ENCODE measurements at regions of chr1 and their contacts with region 1.

Region 1: GRCh38 chr1:61588736-61589672 is 135.9 kb downstream of the TM2D1 start:
- DNase-seq: peak; percentile 59
- ATAC-seq: peak; percentile 99
- H3K4me3 ChIP-seq: no peak overlapping the region
- H3K27ac ChIP-seq: no peak overlapping the region
- H3K4me1 ChIP-seq: peaks cover 0 to 3% of the 10 kb centered on the region in 2 experiments; a peak in 2 of 4 replicates
- H3K27me3 ChIP-seq: no peaks in the 10 kb centered on the region
- CTCF ChIP-seq: peak; percentile 68 to 94 (median 93)
- POLR2A ChIP-seq: no peak
- RAD21 ChIP-seq: peak; percentile 83

Region 2: DNA sequence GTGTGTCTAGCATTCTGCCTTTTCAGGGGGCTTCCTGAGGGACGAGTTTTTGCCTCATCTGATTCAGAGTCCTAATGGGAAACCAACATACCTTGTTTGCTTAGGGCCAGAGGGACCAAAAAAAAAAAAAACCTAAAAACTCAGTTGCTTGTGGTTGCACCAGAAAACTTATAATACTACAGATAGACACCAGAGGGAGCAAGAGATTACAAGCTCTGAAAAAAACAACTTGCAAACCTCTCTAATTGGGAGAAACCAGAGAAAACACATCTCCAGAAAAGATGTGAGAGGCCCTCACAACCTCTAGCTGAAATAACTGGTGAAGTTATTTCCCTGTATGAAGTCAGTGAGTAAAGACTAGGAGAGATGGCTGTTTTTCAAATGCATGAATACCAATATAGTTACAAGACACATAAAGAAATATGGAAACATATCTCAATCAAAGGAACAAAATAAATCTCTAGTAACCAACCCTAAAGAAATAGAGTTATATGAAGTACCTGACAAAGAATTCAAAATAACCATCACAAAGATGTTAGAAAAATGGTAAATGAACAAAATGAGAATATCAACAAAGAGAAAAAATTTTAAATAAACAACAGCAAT is 740.3 kb before region 1 on chr1:
- CTCF ChIA-PET with region 1: interaction called, 7 read pairs
- POLR2A ChIA-PET with region 1: no interaction called
- RAD21 ChIA-PET with region 1: no interaction called
- intact Hi-C with region 1: loop called (anchors 2 kb)
- DNase-seq: peak; percentile 54
- ATAC-seq: peak; percentile 69
- H3K4me3 ChIP-seq: no peak overlapping the region
- H3K27ac ChIP-seq: no peak overlapping the region
- H3K4me1 ChIP-seq: no peaks in the 10 kb centered on the region
- H3K27me3 ChIP-seq: no peaks in the 10 kb centered on the region
- CTCF ChIP-seq: peak; percentile 51 to 69 (median 60); a peak in 4 of 6 replicates
- POLR2A ChIP-seq: no peak
- RAD21 ChIP-seq: peak; percentile 74

Region 3: GRCh38 chr1:60978421-60979357 is 610.3 kb before region 1 on chr1:
- CTCF ChIA-PET with region 1: interaction called, 22 read pairs
- POLR2A ChIA-PET with region 1: no interaction called
- RAD21 ChIA-PET with region 1: no interaction called
- intact Hi-C with region 1: loop called (anchors 1 kb)
- DNase-seq: no peak
- ATAC-seq: peak; percentile 95
- H3K4me3 ChIP-seq: no peak overlapping the region
- H3K27ac ChIP-seq: no peak overlapping the region
- H3K4me1 ChIP-seq: no peaks in the 10 kb centered on the region
- H3K27me3 ChIP-seq: no peaks in the 10 kb centered on the region
- CTCF ChIP-seq: peak; percentile 71 to 74 (median 74); a peak in 5 of 6 replicates
- POLR2A ChIP-seq: no peak
- RAD21 ChIP-seq: peak; percentile 88

Region 4: GRCh38 chr1:61049850-61050540 is 539.0 kb before region 1 on chr1:
- CTCF ChIA-PET with region 1: interaction called, 19 read pairs
- POLR2A ChIA-PET with region 1: no interaction called
- RAD21 ChIA-PET with region 1: interaction called in 1 of 2 experiments, 3 read pairs
- intact Hi-C with region 1: loop called (anchors 10 kb)
- DNase-seq: peak; percentile 73
- ATAC-seq: peak; percentile 90
- H3K4me3 ChIP-seq: peak overlapping the region; percentile 53 to 75
- H3K27ac ChIP-seq: peak overlapping the region; percentile 8; the same call in 1 of the 2 replicates
- H3K4me1 ChIP-seq: peaks cover 0 to 8% of the 10 kb centered on the region in 2 experiments; a peak in 2 of 4 replicates
- H3K27me3 ChIP-seq: no peaks in the 10 kb centered on the region
- CTCF ChIP-seq: peak; percentile 74 to 97 (median 91)
- POLR2A ChIP-seq: no peak
- RAD21 ChIP-seq: peak; percentile 87

Region 5: DNA sequence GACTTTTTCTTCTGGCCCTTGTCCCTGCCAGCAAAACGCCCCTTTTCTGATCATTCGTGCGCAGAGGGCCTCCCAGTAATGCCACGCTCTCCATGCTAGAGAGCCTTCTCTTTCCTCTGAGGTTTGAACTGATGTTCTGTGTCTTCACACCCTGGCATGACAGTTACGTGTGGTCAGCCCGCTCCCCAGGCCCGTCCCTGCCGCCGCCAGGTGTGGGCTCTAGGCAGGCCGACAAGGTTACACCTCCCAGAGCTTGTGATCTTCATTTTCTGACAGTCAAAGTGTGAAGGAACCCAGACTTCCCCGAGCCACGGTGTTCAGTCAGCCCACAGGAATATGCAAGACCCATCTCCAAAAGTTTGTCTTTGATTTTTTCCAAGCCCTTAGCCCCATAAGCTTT is 129.7 kb before region 1 on chr1:
- CTCF ChIA-PET with region 1: no interaction called
- POLR2A ChIA-PET with region 1: no interaction called
- RAD21 ChIA-PET with region 1: no interaction called
- intact Hi-C with region 1: no loop called
- DNase-seq: no peak
- ATAC-seq: no peak
- H3K4me3 ChIP-seq: no peak overlapping the region
- H3K27ac ChIP-seq: no peak overlapping the region
- H3K4me1 ChIP-seq: no peaks in the 10 kb centered on the region
- H3K27me3 ChIP-seq: no peaks in the 10 kb centered on the region
- CTCF ChIP-seq: no peak
- POLR2A ChIP-seq: no peak
- RAD21 ChIP-seq: no peak

Region 6: DNA sequence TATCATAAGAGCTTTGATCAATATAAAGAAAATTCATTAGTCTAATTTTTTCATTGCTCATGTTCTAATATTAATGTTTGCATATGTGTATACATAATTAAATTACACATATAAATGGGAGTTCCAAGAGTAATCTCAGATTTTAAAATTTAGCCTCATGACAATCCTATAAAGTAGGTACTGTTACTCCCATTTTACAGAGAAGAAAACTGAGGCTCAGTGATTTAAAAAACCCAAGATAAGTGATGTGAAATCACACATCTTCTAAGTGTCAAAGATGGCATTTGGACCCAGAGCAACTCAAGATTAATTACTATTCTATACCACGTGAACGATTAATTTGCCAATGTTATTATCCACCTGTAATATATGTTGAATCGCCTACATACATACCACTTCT is 13.7 kb after region 1 on chr1:
- CTCF ChIA-PET with region 1: interaction called, 12 read pairs
- POLR2A ChIA-PET with region 1: no interaction called
- RAD21 ChIA-PET with region 1: no interaction called
- intact Hi-C with region 1: no loop called
- DNase-seq: no peak
- ATAC-seq: no peak
- H3K4me3 ChIP-seq: no peak overlapping the region
- H3K27ac ChIP-seq: no peak overlapping the region
- H3K4me1 ChIP-seq: peaks cover 0 to 10% of the 10 kb centered on the region in 2 experiments; a peak in 1 of 4 replicates
- H3K27me3 ChIP-seq: no peaks in the 10 kb centered on the region
- CTCF ChIP-seq: no peak
- POLR2A ChIP-seq: no peak
- RAD21 ChIP-seq: no peak

Region 7: DNA sequence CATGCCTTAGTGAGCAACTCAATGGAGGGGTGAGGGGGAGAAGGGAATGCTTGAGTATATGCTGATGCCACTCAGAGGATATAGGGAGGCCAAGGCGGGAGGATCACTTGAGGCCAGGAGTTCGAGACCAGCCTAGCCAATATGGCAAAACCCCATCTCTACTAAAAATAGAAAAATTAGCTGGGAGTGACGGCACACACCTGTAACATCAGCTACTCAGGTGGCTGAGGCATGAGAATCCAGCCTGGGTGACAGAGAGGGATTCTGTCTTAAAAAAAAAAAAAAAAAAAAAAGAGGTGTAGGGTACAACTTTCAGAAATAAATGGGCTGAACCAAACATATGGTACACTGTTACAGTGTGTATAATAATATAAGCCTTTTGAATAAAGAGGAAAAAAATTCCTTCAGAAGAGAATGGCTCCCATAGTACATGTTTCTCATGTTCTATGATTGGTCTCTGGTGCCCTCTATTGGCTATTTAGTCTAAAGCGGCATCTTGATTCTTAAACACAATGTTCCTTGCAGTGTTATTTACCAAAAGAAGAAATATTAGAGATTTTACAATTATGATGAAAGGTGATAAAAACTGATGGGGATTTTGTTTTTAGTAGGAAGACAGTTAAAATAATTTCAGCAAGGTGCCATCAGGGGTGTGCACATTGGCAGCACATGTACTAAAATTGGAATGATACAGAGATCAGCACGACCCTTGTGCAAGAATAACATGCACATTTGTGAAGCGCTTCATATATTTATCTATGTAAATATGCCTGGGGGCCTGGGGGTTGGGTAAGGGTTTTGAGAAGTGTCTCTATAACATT is 263.1 kb after region 1 on chr1:
- CTCF ChIA-PET with region 1: interaction called, 6 read pairs
- POLR2A ChIA-PET with region 1: no interaction called
- RAD21 ChIA-PET with region 1: no interaction called
- intact Hi-C with region 1: loop called (anchors 2 kb)
- DNase-seq: peak; percentile 56
- ATAC-seq: peak; percentile 84
- H3K4me3 ChIP-seq: no peak overlapping the region
- H3K27ac ChIP-seq: no peak overlapping the region
- H3K4me1 ChIP-seq: no peaks in the 10 kb centered on the region
- H3K27me3 ChIP-seq: no peaks in the 10 kb centered on the region
- CTCF ChIP-seq: peak; percentile 57 to 74 (median 60); a peak in 5 of 6 replicates
- POLR2A ChIP-seq: no peak
- RAD21 ChIP-seq: peak; percentile 80